ENCODE measurements at regions of chr6 and their contacts with region 1.

Region 1: GRCh38 chr6:143940011-143940597 is 68.0 kb downstream of the PLAGL1 start:
- DNase-seq: peak; percentile 45
- H3K4me3 ChIP-seq: no peak overlapping the region
- H3K27ac ChIP-seq: no peak overlapping the region
- H3K4me1 ChIP-seq: no peaks in the 10 kb centered on the region
- H3K27me3 ChIP-seq: peaks cover under 1 to 7% of the 10 kb centered on the region in 2 experiments
- CTCF ChIP-seq: peak; percentile 59 to 60
- POLR2A ChIP-seq: no peak

Region 2: GRCh38 chr6:143928853-143929252 is 11.3 kb before region 1 on chr6:
- CTCF ChIA-PET with region 1: interaction called, 13 read pairs
- POLR2A ChIA-PET with region 1: no interaction called
- dilution Hi-C with region 1: no loop called
- intact Hi-C with region 1: no loop called
- DNase-seq: no peak
- H3K4me3 ChIP-seq: no peak overlapping the region
- H3K27ac ChIP-seq: no peak overlapping the region
- H3K4me1 ChIP-seq: no peaks in the 10 kb centered on the region
- H3K27me3 ChIP-seq: peaks cover 0 to 7% of the 10 kb centered on the region in 2 experiments
- CTCF ChIP-seq: no peak
- POLR2A ChIP-seq: no peak

Region 3: DNA sequence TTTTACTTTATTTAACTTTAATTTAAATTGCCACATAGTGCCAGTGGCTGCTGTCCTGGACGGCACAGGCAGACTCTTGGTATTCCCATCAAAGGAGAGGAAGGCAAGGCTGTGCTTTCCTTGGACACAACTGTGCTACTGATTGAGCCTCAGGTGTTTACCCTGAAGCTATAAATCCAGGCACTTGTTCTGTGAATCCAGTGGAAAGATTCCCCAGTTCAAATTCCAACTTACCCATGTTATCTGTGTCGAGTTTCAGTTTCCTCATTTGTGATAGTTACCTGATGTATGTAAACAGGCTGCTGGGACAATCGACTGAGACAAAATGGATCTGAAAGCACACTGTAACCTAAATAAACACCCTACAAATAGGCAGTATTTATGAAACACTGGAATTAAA is 10.8 kb after region 1 on chr6:
- CTCF ChIA-PET with region 1: interaction called, 12 read pairs
- POLR2A ChIA-PET with region 1: no interaction called
- dilution Hi-C with region 1: no loop called
- intact Hi-C with region 1: no loop called
- DNase-seq: no peak
- H3K4me3 ChIP-seq: no peak overlapping the region
- H3K27ac ChIP-seq: no peak overlapping the region
- H3K4me1 ChIP-seq: no peaks in the 10 kb centered on the region
- H3K27me3 ChIP-seq: peaks cover 0 to 5% of the 10 kb centered on the region in 2 experiments
- CTCF ChIP-seq: no peak
- POLR2A ChIP-seq: no peak

Region 4: DNA sequence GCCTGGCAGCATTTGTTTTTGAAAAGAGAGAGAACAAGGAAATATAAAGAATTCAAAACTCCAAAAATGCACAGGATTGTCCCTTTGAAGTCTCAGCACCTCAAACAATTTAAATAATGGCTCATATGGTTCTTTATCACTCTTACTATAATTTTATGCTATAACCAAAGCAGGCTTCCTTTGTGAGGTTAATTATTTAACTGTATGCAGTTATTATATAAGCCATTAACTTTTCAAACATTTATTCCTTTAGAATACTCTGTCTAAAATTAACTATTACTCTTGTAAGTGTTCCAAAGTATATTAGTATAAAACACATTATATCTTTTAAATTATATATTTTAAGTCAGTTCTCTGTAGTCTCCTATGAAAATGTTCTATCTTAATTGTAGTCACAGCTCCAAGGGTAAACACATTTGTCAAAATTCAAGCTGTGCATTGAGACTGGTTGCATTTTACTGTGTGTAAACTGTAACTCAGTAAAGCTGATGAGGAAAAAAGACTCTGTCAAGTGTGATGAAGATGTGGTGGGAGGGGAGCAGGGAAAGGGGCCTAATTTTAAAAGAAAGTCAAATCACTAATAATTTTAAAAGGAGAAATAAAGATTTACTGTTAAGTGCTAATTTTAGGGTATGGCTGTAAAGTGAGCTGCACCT is 88.0 kb after region 1 on chr6:
- CTCF ChIA-PET with region 1: no interaction called
- POLR2A ChIA-PET with region 1: no interaction called
- dilution Hi-C with region 1: no loop called
- intact Hi-C with region 1: no loop called
- DNase-seq: no peak
- H3K4me3 ChIP-seq: no peak overlapping the region
- H3K27ac ChIP-seq: no peak overlapping the region
- H3K4me1 ChIP-seq: no peaks in the 10 kb centered on the region
- H3K27me3 ChIP-seq: peaks cover 7 to 10% of the 10 kb centered on the region in 2 experiments
- CTCF ChIP-seq: no peak
- POLR2A ChIP-seq: no peak

Measured in endothelial cell of umbilical vein (primary cell).